ENCODE measurements at regions of chr19 and their contacts with region 1.

Region 1: DNA sequence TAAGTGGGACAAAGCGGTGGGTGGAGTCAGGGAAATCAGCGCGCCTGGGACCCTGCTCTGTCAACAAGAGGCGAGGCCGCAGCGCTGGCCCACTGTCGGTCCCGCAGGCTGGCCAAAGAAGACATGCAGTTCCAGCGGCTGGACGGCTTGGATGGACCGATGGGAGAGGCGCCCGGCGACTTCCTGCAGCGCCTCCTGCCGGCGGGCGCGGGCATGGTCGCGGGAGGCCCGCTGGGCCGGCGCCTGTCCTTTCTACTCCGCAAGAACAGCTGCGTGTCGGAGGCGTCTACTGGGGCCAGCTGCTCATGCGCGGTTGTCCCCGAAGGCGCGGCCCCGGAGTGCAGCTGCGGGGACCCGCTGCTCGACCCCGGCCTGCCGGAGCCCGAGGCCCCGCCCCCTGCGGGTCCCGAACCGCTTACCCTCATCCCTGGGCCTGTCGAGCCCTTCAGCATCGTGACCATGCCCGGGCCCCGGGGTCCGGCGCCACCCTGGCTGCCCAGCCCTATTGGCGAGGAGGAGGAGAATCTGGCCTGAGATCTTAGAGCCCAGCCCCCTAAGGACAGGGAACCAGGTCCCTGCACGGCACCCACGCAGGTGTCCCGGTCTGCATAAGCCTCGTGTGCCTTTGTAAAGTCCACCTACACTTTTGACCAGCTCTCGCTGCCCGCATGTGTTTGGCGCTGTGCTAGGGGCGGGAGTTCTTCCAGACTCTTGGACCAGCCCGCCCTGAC is 6.1 kb downstream of the BEST2 start:
- H3K4me3 ChIP-seq: peak overlapping the region; percentile 1; the same call in 1 of the 2 replicates
- H3K27ac ChIP-seq: no peak overlapping the region
- H3K4me1 ChIP-seq: no peaks in the 10 kb centered on the region
- CTCF ChIP-seq: peak; percentile 89

Region 2: DNA sequence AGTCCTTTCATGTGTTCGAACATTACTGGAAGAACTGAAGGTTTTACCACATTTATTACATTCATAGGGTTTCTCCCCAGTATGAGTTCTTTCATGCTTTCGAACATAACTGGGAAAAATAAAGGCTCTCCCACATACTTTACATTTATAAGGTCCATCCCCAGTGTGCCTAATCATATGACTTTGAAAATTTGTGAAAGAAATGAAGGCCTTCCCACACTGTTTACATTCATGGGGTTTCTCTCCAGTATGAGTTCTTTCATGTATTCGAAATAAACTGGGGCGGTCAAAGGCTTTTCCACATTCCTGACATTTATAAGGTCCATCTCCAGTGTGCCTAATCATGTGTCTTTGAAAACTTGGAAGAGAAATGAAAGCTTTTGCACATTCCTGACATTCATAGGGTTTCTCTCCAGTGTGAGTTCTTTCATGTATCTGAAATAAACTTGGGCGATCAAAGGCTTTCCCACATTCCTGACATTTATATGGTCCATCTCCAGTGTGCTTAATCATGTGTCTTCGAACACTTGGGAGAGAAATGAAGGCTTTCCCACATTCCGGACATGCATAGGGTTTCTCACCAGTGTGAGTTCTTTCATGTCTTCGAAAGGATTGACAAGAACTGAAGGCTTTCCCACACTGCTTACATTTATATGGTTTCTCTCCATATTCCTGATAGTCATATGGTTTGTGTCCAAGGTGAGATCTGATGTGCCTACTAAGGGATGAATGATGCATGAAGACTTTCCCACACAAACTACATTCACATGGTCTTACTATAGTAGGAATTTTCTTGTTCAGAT is 230.5 kb before region 1 on chr19:
- CTCF ChIA-PET with region 1: no interaction called
- POLR2A ChIA-PET with region 1: no interaction called
- H3K4me3 ChIP-seq: no peak overlapping the region
- H3K27ac ChIP-seq: no peak overlapping the region
- H3K4me1 ChIP-seq: no peaks in the 10 kb centered on the region
- CTCF ChIP-seq: no peak

Region 3: GRCh38 chr19:12716861-12717260 is 40.8 kb before region 1 on chr19:
- CTCF ChIA-PET with region 1: interaction called, 15 read pairs
- POLR2A ChIA-PET with region 1: no interaction called
- H3K4me3 ChIP-seq: no peak overlapping the region
- H3K27ac ChIP-seq: no peak overlapping the region
- H3K4me1 ChIP-seq: no peaks in the 10 kb centered on the region
- CTCF ChIP-seq: peak; percentile 72

Region 4: DNA sequence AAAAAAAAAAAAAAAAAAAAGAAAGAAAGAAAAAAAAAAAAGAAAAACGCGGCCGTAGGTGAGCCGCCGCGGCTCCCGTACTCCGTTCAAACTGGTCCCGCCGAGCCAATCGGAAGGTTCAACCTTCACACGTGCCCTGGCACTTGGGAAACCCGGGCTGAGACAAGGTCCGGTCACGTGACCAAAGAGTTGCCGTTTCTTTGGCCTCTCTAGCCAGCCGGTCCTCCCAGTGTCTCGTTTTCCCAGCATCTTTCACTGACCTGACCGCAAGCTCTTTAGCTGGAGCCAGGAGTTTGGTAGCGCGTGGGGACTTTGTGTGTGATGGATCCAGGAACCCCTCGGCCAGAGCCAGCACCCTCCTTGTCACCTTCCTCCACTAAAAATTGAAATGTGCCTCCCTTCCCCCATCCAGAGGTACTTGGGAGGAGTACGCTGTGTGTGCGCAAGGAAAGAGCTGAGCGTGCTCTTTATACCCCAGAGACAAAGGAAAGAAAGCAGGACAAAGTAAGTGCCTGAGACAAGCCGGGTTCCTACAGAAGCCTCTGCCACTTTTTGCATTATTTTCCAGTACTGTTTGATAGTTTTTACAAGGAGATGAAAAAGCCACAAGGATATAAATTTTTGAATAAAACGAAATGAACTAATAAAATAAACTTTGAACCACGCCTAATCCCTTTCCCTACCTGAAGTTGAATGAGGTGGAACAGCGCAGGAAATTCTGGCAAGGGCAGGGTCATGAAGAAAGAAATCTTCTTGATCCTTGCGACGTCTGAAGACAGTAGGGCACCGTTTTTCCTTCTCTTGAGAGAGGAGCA is 34.9 kb before region 1 on chr19:
- CTCF ChIA-PET with region 1: interaction called, 15 read pairs
- POLR2A ChIA-PET with region 1: interaction called, 3 read pairs
- H3K4me3 ChIP-seq: peak overlapping the region; percentile 79
- H3K27ac ChIP-seq: peak overlapping the region; percentile 97
- H3K4me1 ChIP-seq: no peaks in the 10 kb centered on the region
- CTCF ChIP-seq: no peak

Region 5: DNA sequence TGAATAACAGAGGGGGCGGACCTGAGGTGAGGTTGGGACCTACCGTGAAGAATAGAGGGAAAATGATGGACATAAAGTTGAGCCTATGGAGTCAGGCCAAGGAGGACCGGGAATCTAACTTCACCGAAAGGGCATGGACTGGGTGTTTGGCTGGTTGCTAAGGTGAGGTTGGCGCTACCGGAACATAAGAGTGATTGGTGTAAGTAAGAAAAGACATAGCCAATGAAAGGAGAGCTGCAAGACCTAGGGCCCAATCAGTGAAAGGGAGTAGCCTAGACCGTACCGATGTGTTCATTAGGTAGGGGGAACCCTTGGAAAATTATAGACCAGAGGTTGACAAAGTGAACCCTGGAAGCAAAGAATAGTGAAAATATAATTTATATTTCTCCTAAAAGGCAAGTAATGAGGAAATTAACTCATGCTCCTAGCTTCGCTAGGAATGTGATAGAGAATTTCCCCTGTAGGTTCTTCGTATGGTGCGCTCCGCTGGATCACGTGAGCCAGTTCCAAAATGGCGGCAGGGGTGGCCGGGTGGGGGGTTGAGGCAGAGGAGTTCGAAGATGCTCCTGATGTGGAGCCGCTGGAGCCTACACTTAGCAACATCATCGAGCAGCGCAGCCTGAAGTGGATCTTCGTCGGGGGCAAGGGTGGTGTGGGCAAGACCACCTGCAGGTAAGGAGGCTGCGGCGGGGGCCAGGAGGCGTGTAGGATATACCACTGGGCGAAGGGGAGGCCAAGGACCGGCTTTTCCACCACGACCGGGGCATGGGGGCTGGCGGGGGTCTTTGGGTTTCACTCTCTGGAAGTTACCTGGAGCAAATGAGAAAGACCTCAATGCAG is 20.5 kb before region 1 on chr19 and contains the start of gene GET3:
- CTCF ChIA-PET with region 1: interaction called, 32 read pairs
- POLR2A ChIA-PET with region 1: interaction called, 4 read pairs
- H3K4me3 ChIP-seq: peak within 1 kb of the TSS; percentile 96
- H3K27ac ChIP-seq: peak within 1 kb of the TSS; percentile 84
- H3K4me1 ChIP-seq: 0 out of 2 replicates have a peak, but pooled peaks cover 4% of the 10 kb centered on the region
- CTCF ChIP-seq: no peak; the same call in 1 of the 2 replicates

Region 6: DNA sequence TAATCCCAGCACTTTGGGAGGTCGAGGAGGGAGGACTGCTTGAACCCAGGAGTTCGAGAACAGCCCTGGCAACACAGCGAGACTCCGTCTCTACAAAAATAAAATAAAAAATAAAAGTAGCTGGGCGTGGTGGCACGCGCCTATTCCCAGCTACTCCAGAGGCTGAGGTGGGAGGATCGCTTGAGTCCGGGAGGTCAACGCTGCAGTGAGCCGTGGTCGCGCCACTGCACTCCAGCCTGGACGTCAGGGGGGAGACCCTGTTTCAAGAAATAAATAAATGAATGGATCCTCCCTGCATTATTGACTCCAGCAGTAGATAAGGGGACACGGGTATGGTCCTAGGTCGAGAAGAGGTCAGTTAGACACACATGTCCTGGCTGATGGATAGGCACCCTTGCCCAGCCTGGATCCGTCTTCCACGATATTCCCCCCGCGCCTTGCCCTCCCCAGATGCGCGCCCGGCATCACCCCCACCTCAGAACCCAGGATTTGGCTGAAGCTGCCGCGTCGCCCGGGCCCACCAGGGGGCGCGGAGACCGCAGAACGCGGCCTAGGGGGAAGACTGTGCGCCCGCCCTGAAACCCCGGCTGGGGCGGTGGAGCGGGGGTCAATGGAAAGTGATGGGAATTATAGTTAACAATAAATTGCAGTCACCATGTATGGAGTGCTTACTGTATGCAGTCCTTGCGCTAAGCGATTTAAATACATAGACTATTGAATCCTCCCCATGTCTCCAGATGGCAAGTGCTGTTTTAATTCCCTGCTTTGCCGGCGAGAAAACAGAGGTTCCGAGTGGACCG is 19.7 kb after region 1 on chr19:
- CTCF ChIA-PET with region 1: interaction called, 35 read pairs
- POLR2A ChIA-PET with region 1: no interaction called
- H3K4me3 ChIP-seq: peak overlapping the region; percentile 39
- H3K27ac ChIP-seq: no peak overlapping the region
- H3K4me1 ChIP-seq: peaks cover 4% of the 10 kb centered on the region; the same call in 1 of the 2 replicates
- CTCF ChIP-seq: peak; percentile 81

Region 7: DNA sequence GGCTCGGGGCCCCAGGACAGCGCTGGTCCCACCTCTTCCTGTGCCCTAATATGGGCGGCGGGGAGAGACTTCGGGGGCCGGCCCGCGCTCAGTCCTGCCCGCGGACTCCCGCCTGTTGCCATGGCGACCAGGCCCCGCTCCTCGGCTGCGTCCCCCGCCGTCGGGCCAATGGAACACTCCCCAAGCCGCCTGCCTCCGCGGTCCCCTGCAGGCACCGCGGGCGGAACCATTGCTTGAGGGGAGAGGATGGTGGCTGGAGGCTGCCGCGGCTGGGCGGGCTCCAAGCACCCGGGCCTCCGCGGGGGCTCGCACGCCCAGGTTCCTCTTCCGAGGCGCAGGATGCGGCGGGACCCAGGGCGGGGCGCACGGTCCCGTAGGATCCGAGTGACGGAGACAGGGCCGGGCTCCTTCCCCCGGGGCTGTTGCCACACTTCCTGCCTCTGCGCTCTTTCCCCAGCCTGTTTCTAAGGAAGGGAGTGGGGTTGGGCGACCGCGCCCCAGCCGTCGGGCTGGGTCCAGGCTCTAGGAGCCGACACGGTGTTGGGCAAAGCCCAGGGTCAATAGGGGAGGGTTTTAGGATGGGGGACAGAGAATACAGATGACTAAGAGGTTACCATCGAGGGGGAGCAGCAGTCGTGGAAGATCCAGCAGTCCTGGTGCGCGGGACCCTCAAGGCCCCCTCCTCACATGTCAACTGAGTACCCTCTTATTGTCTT is 32.4 kb after region 1 on chr19:
- CTCF ChIA-PET with region 1: interaction called, 386 read pairs
- POLR2A ChIA-PET with region 1: interaction called, 18 read pairs
- H3K4me3 ChIP-seq: peak overlapping the region; percentile 30
- H3K27ac ChIP-seq: no peak overlapping the region; the same call in 1 of the 2 replicates
- H3K4me1 ChIP-seq: peaks cover 21% of the 10 kb centered on the region
- CTCF ChIP-seq: no peak; the same call in 1 of the 2 replicates

Region 8: GRCh38 chr19:12806239-12807081 is 48.8 kb after region 1 on chr19 and contains the start of gene RNASEH2A:
- CTCF ChIA-PET with region 1: interaction called, 386 read pairs
- POLR2A ChIA-PET with region 1: no interaction called
- H3K4me3 ChIP-seq: peak within 1 kb of the TSS; percentile 68
- H3K27ac ChIP-seq: peak within 1 kb of the TSS; percentile 75
- H3K4me1 ChIP-seq: no peaks in the 10 kb centered on the region; the same call in 1 of the 2 replicates
- CTCF ChIP-seq: peak; percentile 86

Measured in HEK293 (cell line).